ENCODE measurements at regions of chr5 and their contacts with region 1.

Region 1: GRCh38 chr5:113330533-113331208 is 104.1 kb downstream of the TSSK1B start:
- DNase-seq: no peak
- ATAC-seq: peak; percentile 50; the same call in 1 of the 2 replicates
- H3K4me3 Mint-ChIP-seq: no peak overlapping the region
- H3K27ac Mint-ChIP-seq: no peak overlapping the region
- H3K4me1 Mint-ChIP-seq: peaks cover 16% of the 10 kb centered on the region
- H3K27me3 Mint-ChIP-seq: no peaks in the 10 kb centered on the region
- CTCF ChIP-seq: no peak

Region 2: GRCh38 chr5:113043491-113043931 is 287.2 kb before region 1 on chr5:
- CTCF ChIA-PET with region 1: interaction called, 10 read pairs
- POLR2A ChIA-PET with region 1: no interaction called
- DNase-seq: peak; percentile 81
- ATAC-seq: peak; percentile 86
- H3K4me3 Mint-ChIP-seq: no peak overlapping the region
- H3K27ac Mint-ChIP-seq: peak overlapping the region; percentile 49
- H3K4me1 Mint-ChIP-seq: no peaks in the 10 kb centered on the region; the same call in 1 of the 2 replicates
- H3K27me3 Mint-ChIP-seq: no peaks in the 10 kb centered on the region
- CTCF ChIP-seq: peak; percentile 32; the same call in 1 of the 2 replicates

Region 3: GRCh38 chr5:113293068-113293974 is 37.4 kb before region 1 on chr5:
- CTCF ChIA-PET with region 1: no interaction called
- POLR2A ChIA-PET with region 1: no interaction called
- DNase-seq: peak; percentile 51
- ATAC-seq: peak; percentile 47
- H3K4me3 Mint-ChIP-seq: peak overlapping the region; percentile 92
- H3K27ac Mint-ChIP-seq: peak overlapping the region; percentile 85
- H3K4me1 Mint-ChIP-seq: peaks cover 60% of the 10 kb centered on the region
- H3K27me3 Mint-ChIP-seq: peaks cover 11% of the 10 kb centered on the region
- CTCF ChIP-seq: no peak

Measured in WTC11 (cell line).